Activated CD4-positive, alpha-beta memory T cell treated with anti-CD3 and anti-CD28 coated beads for 36 hours (primary cell): ENCODE measurements at regions of chr6 and their contacts with region 1.

Region 1: GRCh38 chr6:52210227-52210626 is 24.1 kb downstream of the IL17A start:
- DNase-seq: no peak
- H3K4me3 Mint-ChIP-seq: no peak overlapping the region
- H3K27ac Mint-ChIP-seq: no peak overlapping the region
- H3K4me1 Mint-ChIP-seq: peaks cover 16% of the 10 kb centered on the region
- H3K27me3 Mint-ChIP-seq: peaks cover 27% of the 10 kb centered on the region

Region 2: GRCh38 chr6:52227495-52227894 is 17.3 kb after region 1 on chr6:
- CTCF ChIA-PET with region 1: interaction called, 19 read pairs
- POLR2A ChIA-PET with region 1: no interaction called
- intact Hi-C with region 1: loop called (anchors 2 kb)
- DNase-seq: peak; percentile 90
- H3K4me3 Mint-ChIP-seq: no peak overlapping the region
- H3K27ac Mint-ChIP-seq: no peak overlapping the region
- H3K4me1 Mint-ChIP-seq: peaks cover 20% of the 10 kb centered on the region
- H3K27me3 Mint-ChIP-seq: peaks cover 39% of the 10 kb centered on the region

Region 3: GRCh38 chr6:52233975-52234823 is 24.0 kb after region 1 on chr6:
- CTCF ChIA-PET with region 1: interaction called, 19 read pairs
- POLR2A ChIA-PET with region 1: no interaction called
- intact Hi-C with region 1: loop called (anchors 1 kb)
- DNase-seq: peak; percentile 73
- H3K4me3 Mint-ChIP-seq: no peak overlapping the region
- H3K27ac Mint-ChIP-seq: no peak overlapping the region
- H3K4me1 Mint-ChIP-seq: peaks cover 13% of the 10 kb centered on the region
- H3K27me3 Mint-ChIP-seq: peaks cover 39% of the 10 kb centered on the region

Region 4: DNA sequence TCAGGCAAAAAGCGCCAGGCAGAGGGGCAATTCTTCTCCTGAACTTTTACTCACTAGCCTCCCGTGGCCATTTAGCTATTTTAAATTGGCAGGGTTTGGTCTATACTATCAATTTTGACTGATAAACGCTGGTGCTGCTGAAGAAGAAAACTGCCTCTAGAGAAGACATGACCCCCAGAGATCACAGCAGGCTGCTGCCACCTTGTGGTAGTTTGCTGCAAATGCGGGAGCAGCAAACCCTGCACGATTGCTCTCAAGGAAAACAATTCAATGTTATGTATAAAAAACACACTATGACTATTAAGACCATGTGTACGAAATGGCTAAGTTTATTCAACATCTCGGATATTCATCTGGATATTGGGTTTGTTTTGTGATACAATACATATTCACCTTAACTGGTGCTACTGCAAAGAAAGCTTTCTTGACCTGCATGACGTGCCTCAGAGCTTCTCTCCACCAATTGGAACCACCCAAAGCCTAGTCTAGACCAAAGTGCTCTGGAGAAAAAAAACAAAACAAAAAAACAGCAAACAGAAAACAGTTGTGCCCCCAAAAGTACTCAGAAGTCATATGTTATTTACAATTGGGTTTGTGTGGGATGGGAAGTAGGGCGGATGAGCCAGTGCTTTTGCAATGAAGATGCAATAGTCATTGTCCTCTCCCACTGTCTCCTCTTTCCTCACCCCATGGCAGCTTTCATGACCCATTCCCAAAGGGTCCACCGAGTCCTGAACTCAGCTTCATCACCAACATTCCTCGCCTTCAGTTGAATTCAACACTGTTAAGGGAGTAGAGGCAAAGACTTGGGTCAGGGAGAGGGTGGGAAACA is 53.7 kb after region 1 on chr6:
- CTCF ChIA-PET with region 1: interaction called, 12 read pairs
- POLR2A ChIA-PET with region 1: no interaction called
- intact Hi-C with region 1: loop called (anchors 2 kb)
- DNase-seq: peak; percentile 82
- H3K4me3 Mint-ChIP-seq: no peak overlapping the region
- H3K27ac Mint-ChIP-seq: peak overlapping the region; percentile 49
- H3K4me1 Mint-ChIP-seq: no peaks in the 10 kb centered on the region
- H3K27me3 Mint-ChIP-seq: no peaks in the 10 kb centered on the region

Region 5: DNA sequence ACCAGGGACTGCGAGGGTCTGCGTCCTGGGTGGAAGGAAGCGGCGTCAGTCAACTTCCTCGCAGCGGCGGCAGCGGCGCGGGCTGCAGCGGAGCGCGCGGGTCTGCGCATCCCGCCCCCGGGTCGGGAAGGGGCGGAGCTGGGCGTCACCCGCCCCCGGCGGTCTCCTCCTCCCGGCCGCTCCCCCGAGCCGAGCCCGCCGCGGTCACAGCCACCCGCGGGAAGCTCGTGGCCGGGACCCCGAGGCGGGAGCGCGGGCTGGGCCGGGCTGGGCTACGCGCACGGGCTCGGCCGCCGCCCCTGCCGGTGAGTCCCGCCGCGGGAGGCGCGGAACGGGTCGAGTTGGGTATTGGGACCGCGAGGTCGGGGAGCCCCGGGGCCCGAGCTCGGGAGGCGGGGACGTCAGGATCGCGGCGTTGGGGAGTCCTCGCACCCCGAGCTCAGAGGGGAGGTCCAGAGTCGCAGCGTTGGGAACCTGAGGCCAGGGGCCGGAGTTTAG is 151.8 kb after region 1 on chr6 and contains the start of gene PAQR8:
- CTCF ChIA-PET with region 1: no interaction called
- POLR2A ChIA-PET with region 1: no interaction called
- intact Hi-C with region 1: no loop called
- DNase-seq: peak; percentile 85
- H3K4me3 Mint-ChIP-seq: peak within 1 kb of the TSS; percentile 99
- H3K27ac Mint-ChIP-seq: peak within 1 kb of the TSS; percentile 92
- H3K4me1 Mint-ChIP-seq: peaks cover 33% of the 10 kb centered on the region
- H3K27me3 Mint-ChIP-seq: no peaks in the 10 kb centered on the region
- total RNA-seq, gene PAQR8: 11.2 to 12.2 TPM